ENCODE measurements at regions of chr15 and their contacts with region 1.

Region 1: DNA sequence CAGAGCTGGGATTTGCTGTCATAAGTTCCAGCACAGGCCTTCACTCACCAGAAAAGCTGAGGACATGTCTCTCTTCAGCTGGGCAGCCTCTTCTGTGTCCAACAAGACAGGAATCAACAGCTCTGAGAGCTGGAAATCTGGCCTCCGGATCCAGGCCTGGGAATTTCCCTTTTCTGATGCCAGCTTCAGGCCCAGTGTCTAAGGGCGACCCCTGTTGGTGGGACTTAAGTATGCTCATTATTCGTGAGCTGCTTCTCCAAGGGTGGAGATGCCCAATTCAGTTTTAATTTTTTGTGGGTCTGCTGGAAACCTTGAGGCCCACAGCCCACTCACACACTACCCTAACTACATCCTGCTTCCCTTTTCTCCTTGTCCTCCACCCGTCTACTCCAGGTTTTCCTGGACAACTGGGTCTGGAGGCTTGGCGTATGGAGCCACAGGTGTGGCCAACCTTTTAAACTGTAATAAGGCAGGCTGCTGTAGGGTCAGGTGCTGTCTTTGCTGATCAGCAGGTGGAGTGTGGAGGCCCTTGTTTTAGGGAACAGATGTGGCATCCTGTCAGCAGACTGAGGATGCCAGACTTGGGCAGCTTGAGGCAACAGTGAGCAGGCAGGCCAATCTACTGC is 2.6 kb upstream of the CEMIP start:
- DNase-seq: peak; percentile 53
- ATAC-seq: peak; percentile 50

Region 2: GRCh38 chr15:80455668-80456442 is 320.7 kb before region 1 on chr15:
- intact Hi-C with region 1: loop called (anchors 2 kb)
- DNase-seq: peak; percentile 54
- ATAC-seq: peak; percentile 75

Region 3: GRCh38 chr15:80567721-80568157 is 208.8 kb before region 1 on chr15:
- intact Hi-C with region 1: loop called (anchors 10 kb)
- DNase-seq: no peak
- ATAC-seq: peak; percentile 86

Region 4: GRCh38 chr15:80615761-80616391 is 160.7 kb before region 1 on chr15:
- intact Hi-C with region 1: loop called (anchors 10 kb)
- DNase-seq: peak; percentile 81
- ATAC-seq: peak; percentile 80

Region 5: GRCh38 chr15:80970018-80970658 is 193.6 kb after region 1 on chr15:
- intact Hi-C with region 1: loop called (anchors 5 kb)
- DNase-seq: peak; percentile 53
- ATAC-seq: peak; percentile 71

Region 6: DNA sequence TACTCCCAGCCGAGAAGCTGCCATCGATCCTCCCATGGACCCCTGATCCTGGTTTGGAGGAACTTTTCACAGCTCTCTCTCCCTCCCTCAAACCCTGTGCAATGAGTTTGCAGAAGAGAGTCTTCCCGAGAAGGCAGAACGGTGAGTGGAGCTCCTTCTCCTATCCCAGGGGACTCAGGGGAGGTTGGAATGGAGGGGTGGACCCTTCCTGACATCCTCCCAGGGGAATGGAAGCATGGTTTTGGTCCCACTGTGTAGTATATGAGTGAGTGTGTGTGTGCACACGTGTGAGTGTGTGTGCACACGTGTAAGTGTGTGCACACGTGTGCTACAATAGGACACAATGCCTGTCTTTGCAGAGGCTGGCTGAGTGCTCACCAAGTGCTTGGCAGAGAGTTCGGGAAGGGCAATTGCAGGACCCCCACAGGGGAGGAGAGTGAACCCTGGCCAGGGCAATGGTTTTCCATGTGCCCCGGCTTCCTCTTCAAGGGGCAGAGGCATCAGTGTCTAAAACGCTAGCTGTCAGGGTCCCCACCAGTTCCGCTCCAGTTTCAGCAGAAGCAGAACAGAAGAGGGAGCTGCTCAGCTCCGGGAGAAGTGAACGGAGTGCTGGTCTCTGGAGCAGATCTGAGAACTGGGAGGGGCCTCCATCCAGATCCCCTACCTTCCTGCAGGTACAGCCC is 406.4 kb after region 1 on chr15:
- intact Hi-C with region 1: no loop called
- DNase-seq: no peak
- ATAC-seq: peak; percentile 80